Cardiac septum (tissue), 1 donor: ENCODE measurements at regions of chr1 and their contacts with region 1.

Region 1: DNA sequence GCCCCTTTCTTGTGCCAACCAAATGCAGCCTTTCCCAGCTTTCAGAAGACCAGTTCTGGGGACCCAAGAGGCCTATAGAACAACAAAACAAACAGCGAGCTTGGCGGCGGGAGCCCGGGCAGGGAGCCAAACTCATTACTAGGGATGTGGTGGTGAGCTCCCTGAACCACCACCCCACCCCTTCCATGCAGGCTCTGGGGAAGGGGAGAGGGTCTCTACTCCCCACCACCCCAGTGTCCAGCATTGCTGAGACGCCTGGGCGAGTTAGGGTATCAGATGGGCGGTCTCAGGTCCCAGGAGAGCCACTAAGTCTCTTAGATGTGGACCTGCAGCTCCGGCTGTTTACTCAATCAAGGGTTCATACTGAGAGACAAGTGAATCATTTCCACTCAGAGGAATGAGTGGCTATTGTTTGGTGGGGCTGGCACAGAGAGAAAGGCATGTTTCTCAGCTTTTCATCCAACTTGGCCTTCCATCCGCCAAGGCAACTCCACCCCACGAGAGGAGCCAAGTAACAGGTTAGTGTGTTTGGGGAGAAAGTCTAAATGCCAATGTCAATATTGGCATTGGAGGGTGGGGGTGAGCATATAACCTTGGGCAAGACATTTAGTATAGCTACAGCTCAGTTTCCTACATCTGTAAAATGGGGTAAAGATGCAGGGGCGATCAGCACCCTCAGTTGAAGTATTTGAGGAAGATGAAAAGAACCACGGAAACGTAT is 40.9 kb downstream of the PLXNA2 start:
- DNase-seq: no peak

Region 2: DNA sequence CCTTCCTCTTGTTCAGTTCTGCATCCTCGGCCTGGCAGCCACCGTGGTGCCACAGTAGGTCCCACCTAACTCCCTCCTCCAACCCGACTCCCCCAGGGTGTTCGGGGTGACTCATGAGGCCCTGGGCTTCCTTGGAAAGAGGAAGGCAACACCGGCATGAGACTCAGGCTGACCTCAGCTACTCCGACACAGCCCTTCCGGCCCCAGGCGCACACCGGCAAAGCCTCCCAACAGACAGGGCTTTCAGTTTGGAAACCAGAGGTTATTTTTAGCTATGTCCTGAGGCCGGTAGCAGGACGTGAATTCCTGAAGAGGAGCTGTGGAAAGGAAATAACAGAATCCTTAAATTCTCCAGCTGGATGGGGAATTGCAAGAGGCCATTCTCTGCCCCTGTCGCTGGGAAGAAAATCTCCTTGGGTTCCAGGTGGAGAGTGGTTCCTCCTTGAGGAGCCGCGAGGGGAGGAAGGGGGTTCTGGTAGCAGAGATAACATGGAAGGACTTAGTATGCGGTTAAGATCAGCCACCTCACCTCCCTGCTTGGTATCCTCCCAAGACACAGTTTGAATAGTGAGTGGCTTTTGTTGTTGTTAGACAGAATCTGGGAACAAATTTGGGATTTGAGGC is 16.5 kb after region 1 on chr1:
- intact Hi-C with region 1: loop called (anchors 2 kb)
- DNase-seq: peak; percentile 89

Region 3: DNA sequence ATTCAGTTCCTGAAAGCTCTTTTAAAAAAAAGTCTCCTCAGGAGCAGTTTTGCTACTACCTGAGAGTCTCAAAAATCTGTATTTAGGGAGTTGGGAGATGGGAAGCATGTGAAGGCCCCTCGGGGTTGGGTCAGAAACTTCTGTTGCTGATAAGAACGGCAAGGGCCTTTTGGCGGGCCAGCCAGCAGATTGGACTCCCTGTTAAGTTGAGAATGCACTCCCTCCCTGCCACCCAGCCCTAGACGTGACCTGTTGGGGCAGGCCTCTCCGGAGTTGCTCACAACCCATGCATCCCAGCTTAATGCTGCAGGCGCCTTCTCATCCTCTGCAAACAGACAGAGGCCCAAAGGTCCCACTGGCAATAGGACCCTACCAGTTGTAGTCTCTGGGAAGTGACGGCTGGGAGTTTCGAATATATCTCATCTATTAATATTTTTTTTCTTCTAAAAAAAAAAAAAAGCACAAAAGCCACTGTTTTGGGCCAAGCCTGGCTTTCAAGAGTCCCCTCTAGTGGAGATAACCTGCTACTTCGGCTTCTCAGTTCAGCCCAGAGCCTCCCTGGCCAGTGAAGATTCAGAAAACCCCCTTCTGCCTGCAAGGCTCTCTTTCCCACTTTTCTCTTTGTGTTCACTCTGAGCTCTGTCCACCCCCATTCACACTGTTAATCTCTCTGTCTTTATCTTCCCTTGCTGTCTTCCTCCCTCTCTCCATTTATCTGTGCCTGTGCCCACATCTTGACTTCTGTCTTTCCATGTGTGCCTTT is 35.6 kb after region 1 on chr1:
- intact Hi-C with region 1: loop called (anchors 2 kb)
- DNase-seq: peak; percentile 75

Region 4: DNA sequence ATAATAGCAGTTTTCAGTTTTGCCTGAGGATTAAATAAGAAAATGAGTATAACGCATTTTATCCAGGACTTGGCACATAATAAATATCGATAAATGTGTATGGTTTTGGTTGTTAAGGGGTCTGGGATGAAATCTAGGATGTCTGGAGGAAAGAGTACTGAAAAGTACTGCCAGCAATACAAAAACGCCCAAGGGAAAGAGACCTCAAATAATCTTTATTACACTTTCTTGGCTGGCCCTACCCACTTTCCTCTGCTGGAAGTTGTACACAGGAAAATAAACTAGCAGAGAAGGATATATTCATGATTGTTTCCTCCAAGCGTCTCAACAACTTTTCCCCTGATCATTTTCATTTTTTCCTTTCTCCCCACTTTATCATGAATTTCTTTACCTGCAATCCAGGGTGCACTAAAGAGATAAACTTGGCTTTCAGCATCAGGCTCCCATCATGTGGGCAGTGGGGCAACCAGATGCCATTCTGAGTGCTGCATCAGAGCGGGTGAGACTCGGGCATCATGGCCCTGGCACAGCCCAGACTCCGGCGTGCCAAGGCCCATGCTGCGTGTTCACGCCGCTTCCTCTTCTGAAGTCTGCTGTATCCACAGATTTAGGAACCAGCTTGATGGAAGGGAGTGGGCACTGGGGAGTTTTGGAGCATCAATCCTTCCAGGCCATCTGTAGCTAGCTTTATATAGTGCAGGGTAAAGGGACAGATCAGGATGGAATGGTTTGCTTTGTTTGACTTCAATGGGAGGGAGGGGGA is 76.7 kb after region 1 on chr1:
- intact Hi-C with region 1: no loop called
- DNase-seq: no peak